ENCODE measurements at regions of chr12 and their contacts with region 1.

Region 1: DNA sequence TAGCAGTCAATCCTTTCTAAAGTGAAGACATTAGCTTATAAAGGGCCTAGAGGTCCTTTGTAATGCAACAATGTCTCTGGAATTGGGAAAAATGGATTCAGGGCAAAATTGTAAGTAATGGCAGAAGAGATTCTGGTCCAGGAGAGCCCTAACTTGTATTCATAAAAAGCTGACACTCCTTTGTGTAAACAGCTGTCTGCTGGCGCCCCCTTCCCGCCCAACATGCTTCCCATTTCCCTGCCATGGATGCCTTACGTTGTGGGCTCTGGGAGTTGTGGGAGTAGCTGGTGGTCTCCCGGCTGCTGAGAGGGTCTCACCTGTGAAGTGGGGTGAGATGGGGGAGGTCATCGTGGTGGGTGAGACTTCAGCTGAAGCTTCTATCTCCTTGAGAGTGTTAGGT is 2.3 kb downstream of the ACRBP start:
- DNase-seq: peak in 1 of 35 experiments; percentile 27
- ATAC-seq: no peak
- H3K4me3 ChIP-seq: no peak overlapping the region
- H3K4me3 Mint-ChIP-seq: no peak overlapping the region
- H3K27ac ChIP-seq: no peak overlapping the region
- H3K27ac Mint-ChIP-seq: peak overlapping the region in 1 of 2 donors; percentile 64
- H3K4me1 ChIP-seq: peaks cover 0 to 13% of the 10 kb centered on the region in 2 experiments
- H3K4me1 Mint-ChIP-seq: peaks cover 10 to 25% (median 16%) of the 10 kb centered on the region in 3 donors
- H3K27me3 ChIP-seq: peaks cover 0 to 10% of the 10 kb centered on the region in 2 experiments
- H3K27me3 Mint-ChIP-seq: no peaks in the 10 kb centered on the region

Region 2: DNA sequence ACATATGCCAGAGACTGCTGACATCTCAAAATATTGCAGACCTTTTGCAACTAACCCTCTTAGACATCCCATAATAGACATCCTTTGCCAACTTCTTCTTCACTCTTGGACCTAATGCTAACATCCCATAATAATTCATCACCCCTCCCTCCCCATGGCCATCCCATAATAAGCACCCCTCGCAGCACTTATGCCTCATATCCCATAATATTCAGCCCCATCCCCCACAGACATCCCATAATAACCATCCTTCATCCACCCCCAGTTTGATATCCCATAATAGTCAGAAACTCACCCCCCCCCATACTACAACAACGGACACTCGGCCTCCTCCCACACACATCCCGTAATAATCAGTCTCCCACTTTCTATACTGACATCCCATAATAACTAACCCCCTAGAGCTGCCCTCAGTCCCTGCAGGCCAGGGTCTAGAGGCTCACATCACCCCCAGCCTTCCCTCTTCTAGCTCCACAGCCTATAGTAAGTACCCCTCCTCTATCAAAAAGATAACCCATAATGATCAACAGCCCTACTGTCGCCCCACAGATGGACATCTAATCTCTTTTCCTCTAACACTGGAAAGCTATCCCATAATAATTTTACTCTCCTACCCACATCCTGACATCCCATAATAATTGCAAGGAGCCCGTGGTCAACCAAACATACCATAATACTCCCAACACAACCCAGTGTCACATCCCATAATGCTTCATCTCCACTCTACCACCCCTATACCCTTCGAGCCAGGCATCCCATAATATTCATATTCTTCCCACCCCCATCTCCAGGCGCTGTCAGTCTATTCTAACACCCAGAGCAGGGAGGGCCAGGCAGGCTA is 36.9 kb before region 1 on chr12:
- CTCF ChIA-PET with region 1: no interaction called
- POLR2A ChIA-PET with region 1: interaction called in 1 of 2 experiments, 16 read pairs
- DNase-seq: peak in 33 of 35 experiments; percentile 18 to 84 (median 69)
- ATAC-seq: peak; percentile 15 to 55 (median 20)
- H3K4me3 ChIP-seq: no peak overlapping the region
- H3K4me3 Mint-ChIP-seq: no peak overlapping the region
- H3K27ac ChIP-seq: peak overlapping the region; percentile 90
- H3K27ac Mint-ChIP-seq: no peak overlapping the region
- H3K4me1 ChIP-seq: peaks cover 36 to 69% of the 10 kb centered on the region in 2 experiments
- H3K4me1 Mint-ChIP-seq: peaks cover 48 to 56% (median 53%) of the 10 kb centered on the region in 3 donors
- H3K27me3 ChIP-seq: no peaks in the 10 kb centered on the region
- H3K27me3 Mint-ChIP-seq: no peaks in the 10 kb centered on the region